ENCODE measurements at regions of chr9 and their contacts with region 1.

Region 1: DNA sequence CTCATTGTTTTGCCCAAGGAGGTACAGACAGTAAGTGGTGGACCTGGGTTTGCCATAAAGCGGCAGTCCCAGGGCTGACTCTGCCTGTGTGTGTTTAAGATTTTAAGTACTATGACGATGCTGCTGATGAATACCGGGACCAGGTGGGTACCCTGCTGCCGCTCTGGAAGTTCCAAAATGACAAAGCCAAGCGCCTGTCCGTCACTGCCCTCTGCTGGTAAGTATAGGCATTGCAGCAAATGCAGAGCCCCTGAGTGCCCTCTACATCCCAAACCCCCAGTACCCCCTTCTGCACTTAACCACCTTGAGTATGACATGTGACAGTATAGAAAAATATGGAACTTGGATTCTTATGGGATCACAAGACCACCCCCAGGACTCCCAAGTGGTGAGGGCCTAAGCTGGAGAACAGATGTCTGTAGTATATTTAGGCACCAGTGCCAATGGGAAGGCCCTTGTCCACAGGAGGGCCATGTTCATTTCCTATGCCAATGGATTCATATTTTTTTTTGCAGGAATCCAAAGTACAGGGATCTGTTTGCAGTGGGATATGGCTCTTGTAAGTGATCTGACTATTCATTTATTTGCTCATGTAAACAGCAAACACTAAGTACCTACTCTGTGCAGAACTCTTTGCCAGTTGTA is 22.0 kb downstream of the ENHO start:
- DNase-seq: peak in 1 of 2 donors; percentile 23
- H3K4me3 ChIP-seq: no peak overlapping the region
- H3K27ac ChIP-seq: no peak overlapping the region
- H3K4me1 ChIP-seq: peaks cover 4 to 13% of the 10 kb centered on the region in 2 donors
- H3K27me3 ChIP-seq: no peaks in the 10 kb centered on the region
- CTCF ChIP-seq: peak; percentile 85 to 92 (median 87)
- POLR2A ChIP-seq: no peak

Region 2: GRCh38 chr9:33809506-33809905 is 691.2 kb before region 1 on chr9:
- intact Hi-C with region 1: loop called (anchors 5 kb)
- DNase-seq: no peak
- H3K4me3 ChIP-seq: no peak overlapping the region
- H3K27ac ChIP-seq: no peak overlapping the region
- H3K4me1 ChIP-seq: peaks cover 0 to 4% of the 10 kb centered on the region in 2 donors
- H3K27me3 ChIP-seq: no peaks in the 10 kb centered on the region
- CTCF ChIP-seq: no peak
- POLR2A ChIP-seq: no peak